HAP-1 (cell line): ENCODE measurements at regions of chr5 and their contacts with region 1.

Region 1: DNA sequence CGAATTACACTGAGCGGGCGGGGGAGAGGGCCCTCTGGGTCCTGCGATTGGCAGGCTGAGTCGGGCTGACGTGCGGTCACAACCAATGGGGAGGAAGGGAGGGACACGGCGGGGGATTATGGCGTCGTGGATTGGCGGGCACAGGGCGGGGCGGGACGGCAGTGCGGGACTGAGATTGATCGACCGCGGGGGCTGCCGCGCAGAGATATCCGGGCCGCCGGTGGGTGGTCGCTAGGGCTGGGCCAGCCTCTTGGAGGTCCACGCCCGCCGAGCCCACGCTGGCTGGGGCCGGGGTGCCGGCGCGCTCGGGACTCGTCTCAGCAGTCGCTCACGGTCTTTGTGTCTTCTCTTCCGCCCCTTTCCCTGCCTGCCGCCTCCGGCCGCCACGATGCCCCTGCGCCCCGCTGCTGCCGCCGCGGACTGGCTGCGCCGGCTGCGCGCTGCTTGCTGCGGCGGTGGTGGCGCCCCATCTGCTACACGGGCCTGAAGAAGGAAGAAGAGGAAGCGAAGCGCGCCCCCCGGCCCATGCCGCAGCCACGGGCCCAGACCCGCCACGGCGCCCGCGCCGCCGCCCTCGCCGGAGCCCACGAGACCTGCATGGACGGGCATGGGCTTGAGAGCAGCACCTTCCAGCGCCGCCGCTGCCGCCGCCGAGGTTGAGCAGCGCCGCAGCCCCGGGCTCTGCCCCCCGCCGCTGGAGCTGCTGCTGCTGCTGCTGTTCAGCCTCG is at the start of gene RGMB:
- DNase-seq: peak; percentile 97 to 99
- H3K4me3 ChIP-seq: peak within 1 kb of the TSS; percentile 71
- H3K4me1 ChIP-seq: peaks cover 20% of the 10 kb centered on the region
- H3K27me3 ChIP-seq: no peaks in the 10 kb centered on the region

Region 2: GRCh38 chr5:98031926-98032325 is 741.7 kb before region 1 on chr5:
- in situ Hi-C with region 1: no loop called
- DNase-seq: no peak
- H3K4me3 ChIP-seq: no peak overlapping the region
- H3K4me1 ChIP-seq: no peaks in the 10 kb centered on the region
- H3K27me3 ChIP-seq: no peaks in the 10 kb centered on the region

Region 3: DNA sequence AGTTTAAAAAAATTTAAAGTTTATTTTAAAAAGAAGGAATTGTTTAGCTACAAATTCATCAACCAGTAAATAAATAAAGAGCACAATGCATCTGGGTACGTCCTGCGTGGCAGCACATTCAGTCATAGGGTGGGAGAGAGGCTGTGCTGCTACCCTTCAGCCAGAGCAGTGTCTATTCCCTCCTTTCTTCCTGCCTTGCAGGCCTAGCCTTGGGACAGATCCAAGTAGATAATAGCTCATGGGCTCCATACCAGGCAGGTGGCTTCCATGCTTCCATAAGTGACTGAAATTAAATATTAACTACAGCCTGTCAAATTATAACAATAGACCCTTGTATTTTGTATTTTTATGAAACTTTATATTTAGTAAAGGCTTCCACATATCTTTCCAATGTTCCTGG is 408.5 kb before region 1 on chr5:
- in situ Hi-C with region 1: loop called (anchors 25 kb)
- DNase-seq: no peak
- H3K4me3 ChIP-seq: no peak overlapping the region
- H3K4me1 ChIP-seq: no peaks in the 10 kb centered on the region
- H3K27me3 ChIP-seq: no peaks in the 10 kb centered on the region

Region 4: DNA sequence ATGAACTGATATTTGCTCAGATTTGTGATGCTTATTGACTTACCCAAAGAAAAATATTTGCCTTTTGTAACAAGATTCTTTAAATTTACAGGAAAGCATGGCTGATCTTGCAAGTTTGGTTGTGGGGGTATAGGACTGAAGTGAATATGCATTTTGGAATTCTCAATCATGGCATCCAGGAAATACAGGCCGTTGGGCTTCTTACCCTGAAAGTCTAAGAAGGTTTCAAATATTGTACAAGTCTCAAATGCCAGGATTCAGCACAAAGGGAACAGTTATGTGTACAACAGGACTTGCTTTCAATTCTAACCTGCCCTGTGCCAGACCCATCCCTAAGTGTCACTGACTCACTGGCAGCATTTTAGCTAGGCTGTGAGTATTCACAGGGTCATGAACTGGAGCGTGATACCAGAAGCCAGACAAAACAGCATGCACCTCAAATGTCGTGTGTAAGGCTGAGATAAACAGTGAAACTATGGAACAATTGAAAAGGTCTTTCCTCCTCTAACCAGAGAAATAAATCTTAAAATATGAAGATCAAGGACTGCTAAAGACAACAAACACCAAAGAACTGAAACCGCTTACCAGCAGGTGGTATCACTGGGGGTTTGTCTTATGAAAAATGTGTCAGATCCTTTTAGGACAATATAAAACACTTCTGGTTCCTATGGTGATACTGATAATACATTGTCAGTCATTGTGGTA is 168.8 kb before region 1 on chr5:
- in situ Hi-C with region 1: no loop called
- DNase-seq: no peak
- H3K4me3 ChIP-seq: no peak overlapping the region
- H3K4me1 ChIP-seq: no peaks in the 10 kb centered on the region
- H3K27me3 ChIP-seq: no peaks in the 10 kb centered on the region